ENCODE measurements at regions of chr1 and their contacts with region 1.

Region 1: DNA sequence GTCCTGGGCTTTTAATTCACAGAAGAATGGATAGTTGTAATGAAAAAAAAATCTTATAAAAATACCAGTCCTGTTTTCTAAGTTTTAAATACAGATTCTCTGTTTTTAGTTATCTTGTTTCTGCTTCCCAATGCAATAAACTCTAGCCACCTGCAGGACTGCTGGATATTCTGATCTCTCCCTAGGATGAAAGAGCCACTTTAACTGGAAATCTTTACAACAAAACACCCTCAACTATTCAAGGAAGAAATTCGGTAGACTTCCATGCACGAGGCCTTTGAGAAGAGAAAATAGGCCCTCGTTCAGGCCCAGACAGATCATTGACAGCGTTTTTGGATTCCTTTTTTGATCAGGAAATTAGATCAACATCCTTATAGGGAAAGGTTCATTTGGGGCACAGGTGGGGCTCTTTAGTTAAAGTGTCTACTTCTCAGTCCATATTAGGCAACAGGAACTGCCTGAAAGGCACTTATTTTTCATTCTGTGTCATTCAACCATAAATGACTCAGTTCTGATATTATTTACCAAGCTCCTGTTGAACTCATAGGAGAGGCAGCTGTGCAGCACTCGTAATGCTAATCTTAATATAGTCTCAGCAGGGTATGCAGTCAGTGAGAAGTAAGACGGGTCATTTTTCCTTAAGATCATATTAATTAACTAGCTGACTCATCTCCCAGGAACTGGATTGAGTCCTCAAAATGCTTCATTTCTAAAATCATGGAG is 71.1 kb upstream of the ERRFI1 start:
- DNase-seq: peak; percentile 85
- H3K4me3 Mint-ChIP-seq: peak overlapping the region; percentile 19
- H3K27ac Mint-ChIP-seq: peak overlapping the region; percentile 96
- H3K4me1 Mint-ChIP-seq: peaks cover 55% of the 10 kb centered on the region
- H3K27me3 Mint-ChIP-seq: no peaks in the 10 kb centered on the region
- CTCF ChIP-seq: no peak

Region 2: GRCh38 chr1:8061210-8061609 is 36.0 kb before region 1 on chr1:
- CTCF ChIA-PET with region 1: no interaction called
- POLR2A ChIA-PET with region 1: interaction called, 4 read pairs
- intact Hi-C with region 1: loop called (anchors 2 kb)
- DNase-seq: peak; percentile 89
- H3K4me3 Mint-ChIP-seq: no peak overlapping the region
- H3K27ac Mint-ChIP-seq: peak overlapping the region; percentile 88
- H3K4me1 Mint-ChIP-seq: peaks cover 23% of the 10 kb centered on the region
- H3K27me3 Mint-ChIP-seq: no peaks in the 10 kb centered on the region
- CTCF ChIP-seq: no peak

Region 3: GRCh38 chr1:8083739-8084484 is 13.3 kb before region 1 on chr1:
- CTCF ChIA-PET with region 1: no interaction called
- POLR2A ChIA-PET with region 1: interaction called, 114 read pairs
- intact Hi-C with region 1: no loop called
- DNase-seq: no peak
- H3K4me3 Mint-ChIP-seq: no peak overlapping the region
- H3K27ac Mint-ChIP-seq: no peak overlapping the region
- H3K4me1 Mint-ChIP-seq: peaks cover 24% of the 10 kb centered on the region
- H3K27me3 Mint-ChIP-seq: no peaks in the 10 kb centered on the region
- CTCF ChIP-seq: no peak

Region 4: GRCh38 chr1:8137481-8138244 is 40.4 kb after region 1 on chr1:
- CTCF ChIA-PET with region 1: interaction called, 3 read pairs
- POLR2A ChIA-PET with region 1: interaction called, 114 read pairs
- intact Hi-C with region 1: loop called (anchors 2 kb)
- DNase-seq: peak; percentile 85
- H3K4me3 Mint-ChIP-seq: peak overlapping the region; percentile 55
- H3K27ac Mint-ChIP-seq: peak overlapping the region; percentile 93
- H3K4me1 Mint-ChIP-seq: peaks cover 44% of the 10 kb centered on the region
- H3K27me3 Mint-ChIP-seq: no peaks in the 10 kb centered on the region
- CTCF ChIP-seq: no peak

Region 5: DNA sequence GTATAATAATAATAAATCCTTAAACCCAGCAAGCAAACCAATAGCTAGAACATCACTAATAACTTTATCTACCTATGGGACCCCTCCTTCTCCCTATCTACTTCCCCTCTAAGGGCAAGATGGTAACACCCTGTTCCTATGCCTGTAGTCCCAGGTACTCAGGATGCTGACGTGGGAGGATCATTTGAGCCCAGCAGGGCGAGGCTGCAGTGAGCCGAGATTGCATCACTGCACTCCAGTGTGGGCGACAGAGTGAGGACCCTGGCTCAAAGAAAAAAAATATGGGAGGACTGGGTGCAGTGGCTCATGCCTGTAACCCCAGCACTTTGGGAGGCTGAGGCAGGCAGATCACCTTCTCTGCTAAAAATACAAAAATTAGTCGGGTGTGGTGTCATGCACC is 77.6 kb after region 1 on chr1:
- CTCF ChIA-PET with region 1: no interaction called
- POLR2A ChIA-PET with region 1: interaction called, 11 read pairs
- intact Hi-C with region 1: no loop called
- DNase-seq: peak; percentile 75
- H3K4me3 Mint-ChIP-seq: no peak overlapping the region
- H3K27ac Mint-ChIP-seq: peak overlapping the region; percentile 93
- H3K4me1 Mint-ChIP-seq: peaks cover 14% of the 10 kb centered on the region
- H3K27me3 Mint-ChIP-seq: no peaks in the 10 kb centered on the region
- CTCF ChIP-seq: no peak

Region 6: DNA sequence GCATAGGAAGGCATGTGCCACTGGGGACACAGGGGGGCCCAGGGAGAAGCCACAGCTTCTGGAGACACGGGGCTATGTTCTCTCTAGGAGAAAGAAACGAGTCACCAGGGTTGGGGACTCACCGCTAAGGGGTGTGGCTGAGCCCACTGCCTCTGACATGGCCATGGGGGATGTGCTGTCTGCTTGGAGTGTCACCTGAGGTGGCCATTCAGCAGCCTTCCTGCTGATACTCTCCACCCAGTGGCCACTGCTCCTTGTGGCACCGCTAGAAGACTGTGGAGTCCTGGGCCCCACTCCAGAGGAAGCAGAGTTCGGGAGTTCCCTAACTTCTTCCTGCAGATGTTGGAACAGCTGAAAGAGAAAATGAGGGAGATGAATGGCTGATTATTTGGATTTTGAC is 129.5 kb after region 1 on chr1:
- CTCF ChIA-PET with region 1: no interaction called
- POLR2A ChIA-PET with region 1: no interaction called
- intact Hi-C with region 1: no loop called
- DNase-seq: no peak
- H3K4me3 Mint-ChIP-seq: no peak overlapping the region
- H3K27ac Mint-ChIP-seq: peak overlapping the region; percentile 77
- H3K4me1 Mint-ChIP-seq: peaks cover 30% of the 10 kb centered on the region
- H3K27me3 Mint-ChIP-seq: no peaks in the 10 kb centered on the region
- CTCF ChIP-seq: no peak

Region 7: DNA sequence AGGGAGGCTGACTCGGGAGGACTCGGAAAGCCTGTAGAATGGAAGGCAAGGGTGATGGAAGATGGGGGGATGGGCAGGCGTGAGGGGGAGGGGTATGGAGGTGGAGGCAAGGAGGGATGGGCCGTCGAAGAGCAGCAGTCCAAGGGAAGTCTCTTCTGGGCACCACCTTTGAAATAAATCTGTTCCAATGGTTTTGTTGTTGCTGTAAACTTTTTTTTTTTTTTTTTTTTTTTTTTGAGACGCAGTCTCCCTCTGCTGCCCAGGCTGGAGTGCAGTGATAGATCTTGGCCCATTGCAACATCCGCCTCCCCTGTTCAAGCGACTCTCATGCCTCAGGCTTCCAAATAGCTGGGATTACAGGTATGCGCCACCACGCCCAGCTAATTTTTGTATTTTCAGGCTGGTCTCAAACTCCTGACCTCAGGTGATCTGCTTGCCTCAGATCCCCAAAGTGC is 141.6 kb after region 1 on chr1:
- CTCF ChIA-PET with region 1: interaction called, 3 read pairs
- POLR2A ChIA-PET with region 1: interaction called, 3 read pairs
- intact Hi-C with region 1: loop called (anchors 5 kb)
- DNase-seq: peak; percentile 88
- H3K4me3 Mint-ChIP-seq: no peak overlapping the region
- H3K27ac Mint-ChIP-seq: peak overlapping the region; percentile 86
- H3K4me1 Mint-ChIP-seq: peaks cover 14% of the 10 kb centered on the region
- H3K27me3 Mint-ChIP-seq: no peaks in the 10 kb centered on the region
- CTCF ChIP-seq: peak; percentile 37

Region 8: GRCh38 chr1:8252266-8252951 is 155.2 kb after region 1 on chr1:
- CTCF ChIA-PET with region 1: no interaction called
- POLR2A ChIA-PET with region 1: no interaction called
- intact Hi-C with region 1: no loop called
- DNase-seq: no peak
- H3K4me3 Mint-ChIP-seq: no peak overlapping the region
- H3K27ac Mint-ChIP-seq: no peak overlapping the region
- H3K4me1 Mint-ChIP-seq: peaks cover 9% of the 10 kb centered on the region
- H3K27me3 Mint-ChIP-seq: no peaks in the 10 kb centered on the region
- CTCF ChIP-seq: no peak

Measured in MCF 10A (cell line).